Sigmoid colon (tissue), 7 donors: ENCODE measurements at regions of chrX and their contacts with region 1.

Region 1: GRCh38 chrX:50691820-50692219 is 122.2 kb downstream of the SHROOM4 start:
- DNase-seq: no peak
- H3K4me3 ChIP-seq: no peak overlapping the region
- H3K27ac ChIP-seq: no peak overlapping the region
- H3K4me1 ChIP-seq: no peaks in the 10 kb centered on the region
- H3K27me3 ChIP-seq: no peaks in the 10 kb centered on the region
- CTCF ChIP-seq: peak; percentile 9 to 54 (median 42)
- EP300 ChIP-seq: no peak
- POLR2A ChIP-seq: no peak

Region 2: GRCh38 chrX:50838820-50839600 is 147.2 kb after region 1 on chrX:
- intact Hi-C with region 1: no loop called
- DNase-seq: no peak
- H3K4me3 ChIP-seq: no peak overlapping the region
- H3K27ac ChIP-seq: no peak overlapping the region
- H3K4me1 ChIP-seq: no peaks in the 10 kb centered on the region
- H3K27me3 ChIP-seq: no peaks in the 10 kb centered on the region
- CTCF ChIP-seq: no peak
- EP300 ChIP-seq: no peak
- POLR2A ChIP-seq: no peak

Region 3: GRCh38 chrX:50988649-50989048 is 296.8 kb after region 1 on chrX:
- intact Hi-C with region 1: loop called (anchors 5 kb)
- DNase-seq: no peak
- H3K4me3 ChIP-seq: no peak overlapping the region
- H3K27ac ChIP-seq: no peak overlapping the region
- H3K4me1 ChIP-seq: no peaks in the 10 kb centered on the region
- H3K27me3 ChIP-seq: no peaks in the 10 kb centered on the region
- CTCF ChIP-seq: peak in 2 of 4 experiments; percentile 9 to 36
- EP300 ChIP-seq: no peak
- POLR2A ChIP-seq: no peak